CD8-positive, alpha-beta T cell (primary cell): ENCODE measurements at regions of chr2 and their contacts with region 1.

Region 1: GRCh38 chr2:20661067-20661980 is 5.6 kb upstream of the GDF7 start:
- DNase-seq: peak; percentile 35 to 82 (median 63)
- ATAC-seq: peak; percentile 90
- H3K4me3 ChIP-seq: no peak overlapping the region
- H3K4me3 Mint-ChIP-seq: no peak overlapping the region
- H3K27ac ChIP-seq: no peak overlapping the region
- H3K27ac Mint-ChIP-seq: no peak overlapping the region
- H3K4me1 ChIP-seq: peaks cover 10% of the 10 kb centered on the region
- H3K4me1 Mint-ChIP-seq: peaks cover 9% of the 10 kb centered on the region
- H3K27me3 ChIP-seq: peaks cover 14 to 31% of the 10 kb centered on the region in 2 experiments
- H3K27me3 Mint-ChIP-seq: peaks cover 52% of the 10 kb centered on the region
- CTCF ChIP-seq: peak; percentile 97

Region 2: DNA sequence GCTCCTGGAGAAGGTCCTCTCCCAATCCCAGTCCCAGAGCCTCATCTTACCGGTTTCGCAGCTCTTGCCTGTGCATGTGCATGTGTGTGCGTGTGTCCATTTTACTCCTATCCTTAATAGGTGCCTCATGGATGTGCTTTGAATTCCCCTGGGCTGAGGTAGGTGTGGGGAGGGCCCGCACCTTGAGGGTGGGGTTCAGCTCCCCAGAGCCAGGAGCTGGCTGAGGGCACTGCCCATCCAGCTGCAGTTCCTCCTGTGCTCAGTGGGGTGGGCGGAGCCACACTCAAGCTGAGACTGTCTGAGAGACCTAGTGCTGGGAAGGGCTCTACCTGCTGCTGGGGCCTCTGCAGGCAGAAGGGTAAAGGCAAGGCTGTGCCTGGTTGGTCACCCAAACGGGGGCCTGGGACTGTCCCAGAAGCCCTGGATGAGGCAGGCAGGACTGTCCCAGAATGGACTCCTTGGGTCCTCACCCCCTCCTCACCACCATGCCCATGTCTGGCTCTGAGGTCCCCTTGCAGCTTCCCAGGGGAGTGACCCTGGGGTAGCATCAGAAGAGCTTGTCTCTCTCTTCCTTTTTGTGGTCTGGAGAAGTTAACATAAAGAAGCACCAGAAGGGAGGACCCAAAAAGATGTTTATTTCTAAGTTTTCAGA is 14.5 kb after region 1 on chr2:
- CTCF ChIA-PET with region 1: interaction called, 90 read pairs
- POLR2A ChIA-PET with region 1: interaction called, 3 read pairs
- intact Hi-C with region 1: no loop called
- DNase-seq: peak in 1 of 9 experiments; percentile 28
- ATAC-seq: peak; percentile 46
- H3K4me3 ChIP-seq: no peak overlapping the region
- H3K4me3 Mint-ChIP-seq: no peak overlapping the region
- H3K27ac ChIP-seq: no peak overlapping the region
- H3K27ac Mint-ChIP-seq: no peak overlapping the region
- H3K4me1 ChIP-seq: no peaks in the 10 kb centered on the region
- H3K4me1 Mint-ChIP-seq: no peaks in the 10 kb centered on the region
- H3K27me3 ChIP-seq: peaks cover 0 to 3% of the 10 kb centered on the region in 2 experiments
- H3K27me3 Mint-ChIP-seq: peaks cover 9% of the 10 kb centered on the region
- CTCF ChIP-seq: no peak

Region 3: DNA sequence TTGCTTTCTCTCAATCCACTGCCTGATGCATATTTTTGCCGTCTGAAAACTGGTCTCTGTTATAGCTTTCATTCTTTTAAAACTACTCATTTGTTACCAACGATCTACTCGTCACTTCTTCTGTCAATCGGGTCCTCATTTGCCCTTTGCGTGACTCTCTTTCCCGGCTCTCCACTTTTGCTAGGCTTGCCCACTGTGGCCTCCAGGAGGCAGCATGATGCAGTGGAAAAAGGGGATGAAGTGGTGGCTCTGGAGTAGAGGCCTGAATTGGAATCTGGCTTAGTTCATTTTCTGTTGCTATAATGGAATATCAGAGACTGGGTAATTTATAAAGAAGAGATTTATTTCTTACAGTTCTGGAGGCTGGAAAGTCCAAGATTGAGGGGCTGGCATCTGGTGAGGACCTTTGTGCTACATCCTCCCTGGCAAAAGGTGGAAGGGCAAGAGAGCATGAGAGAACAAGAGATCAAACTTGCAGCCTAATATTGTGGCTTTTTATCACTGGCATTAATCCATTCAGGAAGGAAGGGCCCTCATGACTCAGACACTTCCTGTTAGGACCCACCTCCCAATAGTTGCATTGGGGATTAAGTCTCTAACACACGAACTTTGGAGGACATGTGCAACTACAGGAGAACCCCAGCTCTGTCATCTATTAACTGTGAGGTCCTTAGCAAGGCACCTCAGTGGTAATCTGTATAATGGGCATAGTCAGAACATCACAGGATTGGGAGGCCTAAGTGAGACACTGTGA is 21.0 kb after region 1 on chr2:
- CTCF ChIA-PET with region 1: interaction called, 90 read pairs
- POLR2A ChIA-PET with region 1: no interaction called
- intact Hi-C with region 1: no loop called
- DNase-seq: no peak
- ATAC-seq: no peak
- H3K4me3 ChIP-seq: no peak overlapping the region
- H3K4me3 Mint-ChIP-seq: no peak overlapping the region
- H3K27ac ChIP-seq: no peak overlapping the region
- H3K27ac Mint-ChIP-seq: peak overlapping the region; percentile 67
- H3K4me1 ChIP-seq: no peaks in the 10 kb centered on the region
- H3K4me1 Mint-ChIP-seq: no peaks in the 10 kb centered on the region
- H3K27me3 ChIP-seq: no peaks in the 10 kb centered on the region
- H3K27me3 Mint-ChIP-seq: no peaks in the 10 kb centered on the region
- CTCF ChIP-seq: no peak

Region 4: DNA sequence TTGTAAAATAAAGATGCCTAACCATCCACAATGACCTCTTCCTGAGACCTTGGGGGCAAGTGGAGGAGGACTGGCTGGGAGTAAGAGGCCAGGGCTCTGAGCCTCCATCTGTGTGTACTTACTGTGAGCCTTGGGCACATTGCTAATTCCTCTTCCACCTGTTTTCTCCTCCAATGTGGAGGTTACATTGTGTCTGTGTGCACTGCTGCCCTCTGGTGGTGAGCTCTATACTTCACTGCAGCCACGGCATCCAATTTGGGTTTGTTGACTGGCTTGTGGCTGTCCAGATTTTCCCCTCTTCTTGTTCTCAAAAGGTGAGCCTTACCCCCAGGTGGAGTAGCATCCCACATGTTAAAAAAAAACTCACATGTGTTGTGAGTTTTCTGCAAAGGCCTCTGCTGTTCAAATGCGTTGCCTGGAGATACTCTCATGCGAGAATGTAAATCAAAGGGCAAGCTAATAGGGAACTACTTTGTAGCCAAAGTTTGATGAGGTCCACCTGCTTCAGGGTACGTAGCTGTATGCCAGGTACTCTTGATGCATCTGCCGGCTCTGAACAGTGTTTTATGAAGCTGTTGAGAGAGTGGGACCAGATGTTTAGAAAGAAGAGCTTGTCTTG is 301.7 kb after region 1 on chr2:
- CTCF ChIA-PET with region 1: interaction called, 174 read pairs
- POLR2A ChIA-PET with region 1: no interaction called
- intact Hi-C with region 1: loop called in 1 of 2 experiments (anchors 1 kb)
- DNase-seq: peak; percentile 41 to 76 (median 67)
- ATAC-seq: no peak
- H3K4me3 ChIP-seq: no peak overlapping the region
- H3K4me3 Mint-ChIP-seq: no peak overlapping the region
- H3K27ac ChIP-seq: no peak overlapping the region
- H3K27ac Mint-ChIP-seq: no peak overlapping the region
- H3K4me1 ChIP-seq: no peaks in the 10 kb centered on the region
- H3K4me1 Mint-ChIP-seq: no peaks in the 10 kb centered on the region
- H3K27me3 ChIP-seq: no peaks in the 10 kb centered on the region
- H3K27me3 Mint-ChIP-seq: peaks cover 10% of the 10 kb centered on the region
- CTCF ChIP-seq: peak; percentile 71

Region 5: GRCh38 chr2:21317131-21317530 is 655.8 kb after region 1 on chr2:
- CTCF ChIA-PET with region 1: no interaction called
- POLR2A ChIA-PET with region 1: no interaction called
- intact Hi-C with region 1: loop called in 1 of 2 experiments (anchors 5 kb)
- DNase-seq: peak in 3 of 9 experiments; percentile 6 to 22 (median 7)
- ATAC-seq: no peak
- H3K4me3 ChIP-seq: no peak overlapping the region
- H3K4me3 Mint-ChIP-seq: no peak overlapping the region
- H3K27ac ChIP-seq: no peak overlapping the region
- H3K27ac Mint-ChIP-seq: no peak overlapping the region
- H3K4me1 ChIP-seq: no peaks in the 10 kb centered on the region
- H3K4me1 Mint-ChIP-seq: no peaks in the 10 kb centered on the region
- H3K27me3 ChIP-seq: no peaks in the 10 kb centered on the region
- H3K27me3 Mint-ChIP-seq: peaks cover 5% of the 10 kb centered on the region
- CTCF ChIP-seq: peak; percentile 21

Region 6: DNA sequence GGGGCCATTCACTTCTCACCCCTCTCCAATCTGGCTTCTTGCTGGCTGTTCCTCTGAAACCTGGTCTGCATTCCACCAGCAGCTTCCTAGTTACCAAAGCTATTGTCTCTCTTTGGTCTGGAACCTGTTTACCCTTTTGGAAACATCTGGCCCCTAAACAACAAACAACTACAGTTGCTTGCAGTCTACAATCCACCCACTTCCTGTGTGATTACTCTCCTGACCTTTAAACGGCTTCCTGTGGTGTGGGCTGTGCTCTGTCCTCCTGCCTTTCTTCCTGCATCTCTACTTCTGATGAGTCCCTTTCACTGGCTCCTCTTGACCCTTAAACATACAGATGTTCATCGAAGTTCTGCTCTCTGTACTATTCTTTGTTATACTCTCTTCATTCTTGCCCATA is 766.3 kb after region 1 on chr2:
- CTCF ChIA-PET with region 1: no interaction called
- POLR2A ChIA-PET with region 1: no interaction called
- intact Hi-C with region 1: no loop called
- DNase-seq: no peak
- ATAC-seq: no peak
- H3K4me3 ChIP-seq: no peak overlapping the region
- H3K4me3 Mint-ChIP-seq: no peak overlapping the region
- H3K27ac ChIP-seq: no peak overlapping the region
- H3K27ac Mint-ChIP-seq: no peak overlapping the region
- H3K4me1 ChIP-seq: no peaks in the 10 kb centered on the region
- H3K4me1 Mint-ChIP-seq: no peaks in the 10 kb centered on the region
- H3K27me3 ChIP-seq: no peaks in the 10 kb centered on the region
- H3K27me3 Mint-ChIP-seq: no peaks in the 10 kb centered on the region
- CTCF ChIP-seq: no peak